ENCODE measurements at regions of chr6 and their contacts with region 1.

Region 1: DNA sequence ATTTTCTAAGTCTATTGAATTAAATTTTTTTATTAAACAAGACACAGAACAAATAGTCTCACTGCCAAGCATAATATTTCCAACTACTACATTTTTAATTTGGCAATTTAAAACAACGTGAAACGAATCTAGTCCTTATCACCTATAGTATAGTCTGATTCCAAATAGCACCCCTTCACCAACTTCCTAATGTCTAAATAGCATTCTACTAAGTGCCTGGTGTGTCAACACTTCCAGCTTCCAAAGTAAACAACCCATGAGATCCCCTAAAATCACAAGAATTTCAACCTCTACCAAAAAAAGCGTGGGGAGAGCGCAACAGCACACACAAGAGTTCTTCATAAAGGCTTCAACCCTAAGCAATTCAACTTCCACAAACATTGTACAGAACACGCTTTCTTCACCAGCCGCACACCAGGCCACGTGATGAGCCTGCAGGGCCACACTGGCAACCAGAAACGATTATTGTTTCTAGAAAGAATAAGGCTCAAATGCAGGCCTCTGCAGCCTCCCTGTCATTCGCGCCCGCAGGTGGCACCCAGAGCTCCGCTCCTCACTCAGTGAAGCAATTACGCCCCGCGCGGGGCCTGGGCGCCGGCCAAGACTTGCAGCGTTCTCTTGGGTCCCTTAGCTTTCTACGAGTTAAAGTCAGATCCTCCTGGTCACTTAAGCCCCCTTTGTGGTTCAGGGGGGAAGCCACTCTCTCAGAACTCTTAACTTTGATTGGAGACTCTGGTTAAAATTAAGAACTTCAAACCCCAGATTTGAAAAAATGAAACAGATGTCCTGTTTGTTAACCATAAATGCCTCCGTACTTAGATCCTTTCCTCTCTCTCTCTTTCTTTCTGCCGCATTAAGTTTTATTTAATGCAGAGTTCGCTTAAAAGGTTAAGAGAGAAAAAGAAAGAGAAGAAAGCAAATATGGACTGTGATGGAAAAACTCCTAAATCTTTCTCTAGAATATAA is 18.3 kb downstream of the SIM1 start:
- DNase-seq: no peak
- ATAC-seq: no peak
- H3K4me3 Mint-ChIP-seq: no peak overlapping the region
- H3K27ac Mint-ChIP-seq: no peak overlapping the region
- H3K4me1 Mint-ChIP-seq: peaks cover 8% of the 10 kb centered on the region
- H3K27me3 Mint-ChIP-seq: peaks cover 51% of the 10 kb centered on the region
- CTCF ChIP-seq: no peak

Region 2: DNA sequence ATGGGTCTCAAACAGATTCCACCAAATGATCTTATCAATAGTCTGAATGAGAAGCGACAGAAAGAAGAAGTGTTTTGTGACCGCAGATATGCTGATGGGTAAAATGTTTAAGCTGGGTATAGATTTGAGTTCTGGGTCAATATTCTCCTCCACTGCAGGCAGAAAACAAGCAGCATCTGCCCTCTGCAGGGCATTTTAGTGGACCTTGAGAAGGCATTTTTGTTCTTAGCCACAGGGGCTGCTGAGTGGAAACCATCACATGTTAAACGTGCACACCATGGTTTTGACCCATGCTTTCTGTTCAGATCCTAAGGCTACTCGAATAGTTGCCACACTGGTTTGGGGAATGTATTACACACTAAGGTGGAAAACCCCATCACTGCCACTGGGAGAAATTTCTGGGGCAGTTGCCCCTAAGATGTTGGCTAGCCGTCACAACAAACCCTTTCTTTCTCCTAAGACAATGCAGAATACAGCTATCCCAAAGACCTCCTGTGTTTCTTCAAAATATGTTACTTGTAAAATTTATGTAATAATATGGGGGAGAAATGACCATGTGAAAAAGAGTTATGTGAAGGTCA is 1606.5 kb before region 1 on chr6:
- CTCF ChIA-PET with region 1: no interaction called
- POLR2A ChIA-PET with region 1: no interaction called
- intact Hi-C with region 1: loop called (anchors 5 kb)
- DNase-seq: no peak
- ATAC-seq: no peak
- H3K4me3 Mint-ChIP-seq: no peak overlapping the region
- H3K27ac Mint-ChIP-seq: no peak overlapping the region
- H3K4me1 Mint-ChIP-seq: peaks cover 27% of the 10 kb centered on the region
- H3K27me3 Mint-ChIP-seq: peaks cover 67% of the 10 kb centered on the region
- CTCF ChIP-seq: no peak

Region 3: DNA sequence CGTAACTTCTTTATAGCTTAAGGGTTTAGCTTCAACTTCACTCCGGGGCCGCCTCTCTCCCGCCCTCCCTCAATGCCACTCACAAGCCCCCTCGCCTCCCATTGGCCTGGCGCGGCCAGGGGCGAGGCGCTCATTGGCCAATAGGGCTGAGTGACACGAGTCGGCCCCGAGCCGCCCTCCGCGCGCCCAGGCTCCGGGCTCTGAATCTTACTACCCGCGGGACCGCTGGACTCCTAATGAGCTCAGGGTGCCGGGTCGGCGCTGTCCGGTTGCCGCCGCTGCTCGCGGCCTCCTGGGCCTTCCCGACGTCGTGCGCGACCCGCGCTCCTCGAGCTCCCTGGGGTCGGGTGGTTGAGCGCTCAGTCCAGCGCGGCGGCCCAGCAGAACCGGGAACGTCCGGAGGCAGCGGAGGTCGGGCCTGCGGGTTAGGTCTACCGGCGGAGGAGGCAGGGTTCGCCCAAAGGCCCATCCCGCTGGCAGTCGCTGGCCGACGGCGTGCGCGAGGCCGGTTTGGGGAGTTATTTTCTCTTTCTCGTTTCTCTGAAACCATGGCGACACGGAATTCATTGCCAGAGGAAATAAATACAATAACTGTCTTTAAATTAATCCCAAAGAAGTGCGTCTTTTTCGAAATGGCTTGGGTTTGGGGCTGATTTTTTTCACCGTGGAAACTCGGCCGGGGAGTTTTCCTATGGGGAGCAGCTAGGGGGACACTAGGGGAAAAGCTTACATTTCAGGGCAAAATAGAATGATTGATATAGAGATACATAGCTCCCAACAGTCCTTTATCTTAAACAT is 18.7 kb after region 1 on chr6 and contains the start of gene SIM1:
- CTCF ChIA-PET with region 1: no interaction called
- POLR2A ChIA-PET with region 1: no interaction called
- intact Hi-C with region 1: loop called (anchors 2 kb)
- DNase-seq: no peak
- ATAC-seq: no peak
- H3K4me3 Mint-ChIP-seq: peak within 1 kb of the TSS; percentile 48
- H3K27ac Mint-ChIP-seq: peak within 1 kb of the TSS; percentile 46
- H3K4me1 Mint-ChIP-seq: peaks cover 20% of the 10 kb centered on the region
- H3K27me3 Mint-ChIP-seq: peaks cover 72% of the 10 kb centered on the region
- CTCF ChIP-seq: no peak
- total RNA-seq, gene SIM1: not detected in 2 replicates